ENCODE measurements at regions of chr5 and their contacts with region 1.

Region 1: GRCh38 chr5:139137702-139138101 is 60.5 kb downstream of the SIL1 start:
- DNase-seq: peak; percentile 26
- ATAC-seq: no peak
- H3K4me3 ChIP-seq: no peak overlapping the region
- H3K27ac ChIP-seq: no peak overlapping the region
- H3K4me1 ChIP-seq: peaks cover 18% of the 10 kb centered on the region
- H3K27me3 ChIP-seq: no peaks in the 10 kb centered on the region
- CTCF ChIP-seq: peak; percentile 37; the same call in 1 of the 2 replicates
- POLR2A ChIP-seq: no peak
- RAD21 ChIP-seq: peak; percentile 13; the same call in 1 of the 2 replicates

Region 2: DNA sequence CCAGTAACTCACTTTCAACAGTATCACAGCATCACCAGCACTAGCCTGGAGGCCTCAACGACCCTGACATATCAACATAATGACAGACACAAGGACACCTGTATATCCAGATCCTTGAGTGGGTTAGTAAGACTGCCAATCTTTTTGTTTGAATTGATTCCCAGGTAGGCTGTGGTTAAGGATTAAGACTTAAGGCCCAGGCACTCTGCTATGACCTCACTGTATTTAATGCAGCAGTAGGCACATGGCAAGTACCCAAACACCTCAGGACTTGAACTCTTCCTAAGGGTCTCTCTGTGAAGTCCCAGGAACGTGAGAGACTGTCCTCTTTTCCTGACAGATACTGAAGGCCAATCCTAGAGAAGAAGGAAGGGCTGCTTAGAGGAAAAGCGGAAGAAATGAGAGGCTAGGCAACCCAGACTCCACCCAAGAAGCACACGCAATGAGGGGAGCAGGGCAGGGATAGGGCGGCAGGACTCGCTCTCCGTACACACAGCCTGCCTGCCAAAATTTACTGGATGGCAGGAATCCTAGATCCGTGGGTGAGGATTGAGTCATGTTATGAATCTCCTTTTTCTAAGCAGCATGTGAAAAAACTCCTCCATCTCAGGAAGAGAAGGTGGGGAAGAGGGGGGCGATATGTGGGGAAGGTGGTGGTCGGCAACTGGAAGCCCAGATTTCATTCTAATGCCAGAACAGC is 33.0 kb before region 1 on chr5:
- CTCF ChIA-PET with region 1: no interaction called
- POLR2A ChIA-PET with region 1: no interaction called
- dilution Hi-C with region 1: no loop called
- in situ Hi-C with region 1: no loop called
- intact Hi-C with region 1: loop called (anchors 2 kb)
- DNase-seq: peak; percentile 90
- ATAC-seq: peak; percentile 90
- H3K4me3 ChIP-seq: no peak overlapping the region
- H3K27ac ChIP-seq: peak overlapping the region; percentile 63; the same call in 1 of the 2 replicates
- H3K4me1 ChIP-seq: peaks cover 17% of the 10 kb centered on the region
- H3K27me3 ChIP-seq: no peaks in the 10 kb centered on the region
- CTCF ChIP-seq: no peak
- POLR2A ChIP-seq: no peak
- RAD21 ChIP-seq: no peak; the same call in 1 of the 2 replicates

Region 3: DNA sequence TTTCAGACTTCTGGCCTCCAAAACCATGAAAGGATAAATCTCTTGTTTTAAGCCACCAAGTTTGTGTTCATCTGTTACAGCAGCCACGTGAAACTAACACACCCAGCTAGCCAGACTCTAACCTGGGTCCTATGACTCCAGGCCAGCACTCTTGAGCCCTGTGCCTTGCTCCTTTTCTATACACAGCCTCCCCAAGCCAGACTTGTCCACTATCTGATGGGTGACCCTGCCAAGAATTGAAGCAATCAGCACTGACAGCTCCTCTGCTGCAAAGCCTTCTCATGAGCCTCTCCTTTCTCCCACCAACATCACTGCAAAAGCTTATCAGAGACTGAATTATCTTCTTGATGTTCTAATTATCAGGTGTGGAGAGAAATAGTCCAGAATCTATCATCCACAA is 19.1 kb after region 1 on chr5:
- CTCF ChIA-PET with region 1: no interaction called
- POLR2A ChIA-PET with region 1: no interaction called
- dilution Hi-C with region 1: no loop called
- in situ Hi-C with region 1: no loop called
- intact Hi-C with region 1: no loop called
- DNase-seq: no peak
- ATAC-seq: no peak
- H3K4me3 ChIP-seq: no peak overlapping the region
- H3K27ac ChIP-seq: no peak overlapping the region
- H3K4me1 ChIP-seq: no peaks in the 10 kb centered on the region
- H3K27me3 ChIP-seq: no peaks in the 10 kb centered on the region
- CTCF ChIP-seq: no peak
- POLR2A ChIP-seq: no peak
- RAD21 ChIP-seq: no peak